K562 (cell line): ENCODE measurements at regions of chr11 and their contacts with region 1.

Region 1: DNA sequence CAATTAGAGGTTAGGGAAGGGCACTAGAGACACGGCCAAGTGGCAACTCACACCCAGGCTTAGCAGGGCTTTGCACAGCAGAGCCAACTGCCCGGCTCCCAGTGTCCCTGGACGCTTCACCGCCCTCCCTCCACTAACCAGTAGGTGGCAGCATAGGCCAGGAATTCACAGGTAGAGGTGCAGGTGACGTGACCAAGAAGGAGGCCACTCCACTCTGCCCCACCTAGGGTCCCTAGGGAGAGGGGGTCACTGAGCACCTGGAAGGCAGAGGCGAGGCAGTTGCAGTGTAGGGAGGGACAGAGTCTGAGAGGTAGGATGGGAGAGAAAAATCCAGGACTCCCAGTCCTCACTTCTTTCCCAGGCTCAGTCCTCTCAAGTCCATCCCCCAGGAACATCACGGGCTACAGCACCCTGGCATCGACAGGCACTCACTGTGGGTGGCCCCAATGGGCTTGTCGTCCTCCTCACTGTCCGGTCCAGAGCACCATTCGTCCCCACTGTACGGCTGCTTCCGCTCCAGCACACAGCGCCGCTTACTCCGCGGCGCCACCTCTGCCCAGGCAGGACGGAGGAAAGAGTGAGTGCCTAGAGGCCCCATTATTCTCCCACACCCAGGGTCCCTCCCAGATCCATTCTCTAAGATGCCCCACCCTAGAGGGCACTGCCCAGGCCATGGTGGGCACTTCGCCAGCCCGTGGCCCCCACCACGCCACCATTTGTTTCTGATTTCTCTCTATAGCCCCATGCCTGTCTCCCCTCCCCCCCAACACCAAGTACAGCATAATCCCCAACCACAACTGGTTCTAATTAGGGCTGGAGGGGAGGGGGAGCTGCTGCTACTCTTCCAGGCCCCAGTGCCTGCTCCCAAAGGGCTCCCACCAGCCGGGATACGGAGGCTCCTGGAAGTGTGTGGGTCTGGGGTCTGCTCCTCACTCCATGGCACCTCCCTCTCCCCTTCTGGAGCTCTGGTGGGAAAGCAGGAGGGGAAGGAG is 18.4 kb downstream of the BCL9L start:
- DNase-seq: peak; percentile 80 to 88 (median 80)
- ATAC-seq: peak; percentile 79
- H3K4me3 ChIP-seq: no peak overlapping the region
- H3K27ac ChIP-seq: no peak overlapping the region
- H3K4me1 ChIP-seq: peaks cover 24 to 50% of the 10 kb centered on the region in 2 experiments
- H3K27me3 ChIP-seq: no peaks in the 10 kb centered on the region
- CTCF ChIP-seq: peak; percentile 93 to 95 (median 95)
- EP300 ChIP-seq: no peak
- POLR2A ChIP-seq: no peak
- RAD21 ChIP-seq: peak; percentile 96 to 98

Region 2: GRCh38 chr11:118956094-118956846 is 48.9 kb after region 1 on chr11 and contains the start of gene UPK2:
- CTCF ChIA-PET with region 1: interaction called, 18 read pairs
- POLR2A ChIA-PET with region 1: interaction called, 4 read pairs
- in situ Hi-C with region 1: no loop called
- intact Hi-C with region 1: loop called (anchors 1 kb)
- DNase-seq: peak; percentile 84 to 91 (median 90)
- ATAC-seq: peak; percentile 98
- H3K4me3 ChIP-seq: no peak within 1 kb of the TSS
- H3K27ac ChIP-seq: no peak within 1 kb of the TSS
- H3K4me1 ChIP-seq: peaks cover 0 to 17% of the 10 kb centered on the region in 2 experiments; a peak in 3 of 5 replicates
- H3K27me3 ChIP-seq: peaks cover 12 to 33% of the 10 kb centered on the region in 2 experiments; a peak in 4 of 5 replicates
- CTCF ChIP-seq: peak; percentile 92 to 97 (median 95)
- EP300 ChIP-seq: no peak
- POLR2A ChIP-seq: no peak
- RAD21 ChIP-seq: peak; percentile 89 to 96
- polyA plus RNA-seq, gene UPK2: not detected

Region 3: GRCh38 chr11:119315131-119316015 is 408.0 kb after region 1 on chr11:
- CTCF ChIA-PET with region 1: no interaction called
- POLR2A ChIA-PET with region 1: interaction called, 3 read pairs
- in situ Hi-C with region 1: no loop called
- intact Hi-C with region 1: loop called (anchors 5 kb)
- DNase-seq: peak in 1 of 4 experiments; percentile 27
- ATAC-seq: no peak
- H3K4me3 ChIP-seq: peak overlapping the region; percentile 56; the same call in 1 of the 2 replicates
- H3K27ac ChIP-seq: no peak overlapping the region
- H3K4me1 ChIP-seq: peaks cover 41 to 65% of the 10 kb centered on the region in 2 experiments
- H3K27me3 ChIP-seq: no peaks in the 10 kb centered on the region; a peak in 1 of 5 replicates
- CTCF ChIP-seq: no peak
- EP300 ChIP-seq: no peak
- POLR2A ChIP-seq: no peak
- RAD21 ChIP-seq: no peak